GM12878 (cell line): ENCODE measurements at regions of chr6 and their contacts with region 1.

Region 1: DNA sequence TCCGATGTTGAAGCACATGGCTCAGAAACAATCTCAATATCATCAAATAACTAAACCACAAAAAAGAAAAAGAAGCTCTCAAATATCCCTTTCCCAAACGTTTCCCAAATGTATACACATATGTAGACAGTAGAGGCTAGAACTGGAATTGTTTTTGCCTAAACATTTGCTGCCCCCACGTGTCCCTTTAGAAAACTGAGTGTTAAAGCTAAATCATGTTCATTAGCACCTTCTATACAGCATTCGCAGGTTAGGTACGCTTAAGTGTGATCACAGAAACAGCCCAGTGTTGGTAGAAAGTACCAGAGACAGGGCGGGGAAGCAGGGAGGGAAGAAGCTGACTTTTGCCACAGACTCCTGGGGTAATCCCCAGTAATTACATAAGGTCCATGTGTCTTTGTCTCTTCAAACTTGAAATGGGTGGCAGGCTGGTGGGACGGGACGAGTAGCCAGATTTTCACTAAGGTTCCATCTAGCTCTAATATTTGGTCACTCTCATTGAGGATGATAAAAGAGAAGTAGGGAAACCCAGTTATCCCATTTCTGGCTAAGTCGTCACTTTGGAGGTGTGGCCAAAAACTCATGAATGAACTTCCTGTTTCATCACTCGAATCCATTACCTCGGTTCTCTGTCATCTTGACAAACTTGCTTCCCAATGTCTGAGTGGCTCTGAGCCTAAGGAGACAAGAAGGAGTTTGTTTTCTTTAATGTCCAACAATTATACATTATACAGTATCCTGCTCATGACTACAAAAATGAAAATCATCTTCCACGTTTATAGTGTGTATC is 15.0 kb upstream of the TFAP2A start:
- DNase-seq: peak; percentile 53
- ATAC-seq: peak; percentile 74
- H3K4me3 ChIP-seq: 0 out of 2 replicates have a peak overlapping the region, but pooled peaks have one; percentile 13
- H3K27ac ChIP-seq: no peak overlapping the region
- H3K4me1 ChIP-seq: no peaks in the 10 kb centered on the region; the same call in none of the 2 replicates
- H3K27me3 ChIP-seq: peaks cover 0 to 5% of the 10 kb centered on the region in 2 experiments; a peak in 1 of 4 replicates
- CTCF ChIP-seq: peak; percentile 55 to 78 (median 70); a peak in 5 of 6 replicates
- EP300 ChIP-seq: no peak
- POLR2A ChIP-seq: no peak
- RAD21 ChIP-seq: peak; percentile 85

Region 2: GRCh38 chr6:8539446-8539845 is 1890.4 kb before region 1 on chr6:
- CTCF ChIA-PET with region 1: no interaction called
- POLR2A ChIA-PET with region 1: no interaction called
- RAD21 ChIA-PET with region 1: no interaction called
- SMC1A ChIA-PET with region 1: interaction called, 3 read pairs
- in situ Hi-C with region 1: loop called (anchors 25 kb)
- intact Hi-C with region 1: loop called (anchors 10 kb)
- DNase-seq: no peak
- ATAC-seq: peak; percentile 66
- H3K4me3 ChIP-seq: no peak overlapping the region
- H3K27ac ChIP-seq: no peak overlapping the region
- H3K4me1 ChIP-seq: no peaks in the 10 kb centered on the region
- H3K27me3 ChIP-seq: no peaks in the 10 kb centered on the region
- CTCF ChIP-seq: peak; percentile 14 to 29 (median 29); a peak in 2 of 6 replicates
- EP300 ChIP-seq: no peak
- POLR2A ChIP-seq: no peak
- RAD21 ChIP-seq: peak; percentile 66

Region 3: DNA sequence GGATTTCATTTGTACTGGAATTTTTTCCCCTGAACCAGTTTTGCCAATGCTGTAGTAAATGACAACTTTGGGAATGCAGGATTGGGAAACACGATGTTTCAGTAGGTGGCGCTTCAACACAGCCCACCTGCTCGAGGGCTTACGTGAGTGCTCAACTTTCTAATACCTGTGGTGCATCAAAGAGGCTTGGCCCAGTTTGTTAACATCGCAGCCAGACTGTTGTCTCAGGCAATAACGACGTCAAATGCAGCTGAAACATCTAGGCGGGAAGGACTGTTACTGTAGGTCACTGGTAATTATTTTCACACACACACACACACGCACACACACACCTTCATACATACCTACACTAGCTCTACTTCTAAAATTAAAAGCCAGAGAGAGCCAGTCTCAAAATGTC is 1179.0 kb before region 1 on chr6:
- CTCF ChIA-PET with region 1: interaction called, 33 read pairs
- POLR2A ChIA-PET with region 1: no interaction called
- RAD21 ChIA-PET with region 1: interaction called, 12 read pairs
- SMC1A ChIA-PET with region 1: interaction called, 8 read pairs
- in situ Hi-C with region 1: loop called (anchors 10 kb)
- intact Hi-C with region 1: loop called (anchors 2 kb)
- DNase-seq: no peak
- ATAC-seq: peak; percentile 49; the same call in 2 of the 3 replicates
- H3K4me3 ChIP-seq: no peak overlapping the region
- H3K27ac ChIP-seq: no peak overlapping the region
- H3K4me1 ChIP-seq: no peaks in the 10 kb centered on the region
- H3K27me3 ChIP-seq: no peaks in the 10 kb centered on the region
- CTCF ChIP-seq: peak; percentile 30 to 67 (median 43); a peak in 4 of 6 replicates
- EP300 ChIP-seq: no peak
- POLR2A ChIP-seq: no peak
- RAD21 ChIP-seq: peak; percentile 87

Region 4: DNA sequence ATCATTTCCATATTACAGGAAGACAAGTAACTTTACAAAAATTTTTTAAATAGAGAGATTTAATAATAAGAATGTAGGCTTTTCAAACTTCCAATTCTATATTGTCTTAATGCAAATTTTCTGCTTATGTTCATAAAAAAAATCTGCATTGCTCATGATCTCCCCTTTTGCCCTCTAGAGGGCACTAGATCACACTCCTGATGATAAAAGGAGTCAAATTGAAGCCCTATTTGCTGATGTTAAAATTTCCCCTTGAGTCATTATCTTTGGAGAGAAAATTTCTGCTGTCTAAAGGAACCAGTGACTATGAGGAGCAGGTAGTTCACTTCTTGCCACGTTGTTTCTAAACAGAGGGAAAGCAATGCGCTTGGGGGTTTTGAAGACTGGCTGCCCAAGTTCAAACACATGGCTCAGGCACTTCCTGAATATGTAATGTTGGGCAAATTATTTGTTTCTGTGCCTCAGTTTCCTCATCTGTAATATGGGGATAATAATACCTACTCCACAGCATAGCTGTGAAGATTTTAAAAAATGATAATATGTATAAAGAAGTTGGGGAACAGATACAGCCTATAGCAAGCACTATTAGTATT is 889.2 kb before region 1 on chr6:
- CTCF ChIA-PET with region 1: interaction called, 4 read pairs
- POLR2A ChIA-PET with region 1: no interaction called
- RAD21 ChIA-PET with region 1: interaction called, 4 read pairs
- SMC1A ChIA-PET with region 1: interaction called, 5 read pairs
- in situ Hi-C with region 1: loop called (anchors 10 kb)
- intact Hi-C with region 1: loop called (anchors 5 kb)
- DNase-seq: no peak
- ATAC-seq: peak; percentile 82
- H3K4me3 ChIP-seq: no peak overlapping the region
- H3K27ac ChIP-seq: no peak overlapping the region
- H3K4me1 ChIP-seq: no peaks in the 10 kb centered on the region
- H3K27me3 ChIP-seq: no peaks in the 10 kb centered on the region
- CTCF ChIP-seq: peak; percentile 57 to 62 (median 61)
- EP300 ChIP-seq: no peak
- POLR2A ChIP-seq: no peak
- RAD21 ChIP-seq: peak; percentile 59

Region 5: DNA sequence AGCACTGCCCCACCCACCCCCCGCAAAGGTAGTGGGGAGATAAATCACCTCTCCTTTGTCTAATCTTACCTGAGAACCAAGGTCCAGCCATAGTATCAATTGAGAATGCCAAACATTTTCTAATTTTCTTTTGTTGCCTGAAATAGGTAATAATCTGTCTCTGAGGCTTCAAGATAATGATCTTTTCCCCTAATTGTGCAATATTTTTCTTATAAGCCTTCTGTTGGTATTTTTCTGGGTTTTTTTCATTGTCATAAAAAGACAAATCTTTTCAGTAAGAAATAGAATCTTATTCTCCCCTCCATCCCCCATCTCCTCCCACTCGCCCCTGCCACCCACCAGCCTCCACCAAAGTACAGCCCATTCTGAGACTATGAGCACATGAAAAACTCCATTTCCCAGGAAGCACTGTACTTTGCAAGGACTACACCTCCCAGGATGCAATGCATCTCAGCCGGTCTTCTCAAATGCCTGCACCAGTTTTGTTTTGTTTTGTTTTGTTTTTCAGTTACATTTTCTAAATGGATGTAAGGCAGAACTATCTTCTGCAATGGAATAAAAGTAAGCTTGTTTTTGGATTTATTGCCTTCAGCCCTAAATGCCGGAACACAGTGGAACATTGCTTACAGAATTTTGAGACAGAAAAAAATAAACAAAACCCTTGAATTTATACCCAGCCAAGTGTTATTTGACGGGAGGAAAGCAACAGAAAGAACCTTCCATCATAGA is 282.9 kb before region 1 on chr6:
- CTCF ChIA-PET with region 1: no interaction called
- POLR2A ChIA-PET with region 1: no interaction called
- RAD21 ChIA-PET with region 1: no interaction called
- SMC1A ChIA-PET with region 1: no interaction called
- in situ Hi-C with region 1: no loop called
- intact Hi-C with region 1: loop called (anchors 10 kb)
- DNase-seq: peak; percentile 8
- ATAC-seq: peak; percentile 99
- H3K4me3 ChIP-seq: peak overlapping the region; percentile 19; the same call in 1 of the 2 replicates
- H3K27ac ChIP-seq: no peak overlapping the region
- H3K4me1 ChIP-seq: no peaks in the 10 kb centered on the region
- H3K27me3 ChIP-seq: no peaks in the 10 kb centered on the region
- CTCF ChIP-seq: no peak
- EP300 ChIP-seq: no peak
- POLR2A ChIP-seq: no peak
- RAD21 ChIP-seq: no peak

Region 6: GRCh38 chr6:10381133-10381829 is 48.6 kb before region 1 on chr6:
- CTCF ChIA-PET with region 1: interaction called, 5 read pairs
- POLR2A ChIA-PET with region 1: no interaction called
- RAD21 ChIA-PET with region 1: interaction called, 5 read pairs
- SMC1A ChIA-PET with region 1: no interaction called
- in situ Hi-C with region 1: no loop called
- intact Hi-C with region 1: loop called (anchors 1 kb)
- DNase-seq: no peak
- ATAC-seq: peak; percentile 81
- H3K4me3 ChIP-seq: no peak overlapping the region
- H3K27ac ChIP-seq: no peak overlapping the region
- H3K4me1 ChIP-seq: no peaks in the 10 kb centered on the region
- H3K27me3 ChIP-seq: peaks cover 10 to 32% of the 10 kb centered on the region in 2 experiments
- CTCF ChIP-seq: peak in 2 of 3 experiments; percentile 20 to 46; a peak in 2 of 6 replicates
- EP300 ChIP-seq: no peak
- POLR2A ChIP-seq: no peak
- RAD21 ChIP-seq: peak; percentile 13; the same call in 1 of the 2 replicates

Region 7: DNA sequence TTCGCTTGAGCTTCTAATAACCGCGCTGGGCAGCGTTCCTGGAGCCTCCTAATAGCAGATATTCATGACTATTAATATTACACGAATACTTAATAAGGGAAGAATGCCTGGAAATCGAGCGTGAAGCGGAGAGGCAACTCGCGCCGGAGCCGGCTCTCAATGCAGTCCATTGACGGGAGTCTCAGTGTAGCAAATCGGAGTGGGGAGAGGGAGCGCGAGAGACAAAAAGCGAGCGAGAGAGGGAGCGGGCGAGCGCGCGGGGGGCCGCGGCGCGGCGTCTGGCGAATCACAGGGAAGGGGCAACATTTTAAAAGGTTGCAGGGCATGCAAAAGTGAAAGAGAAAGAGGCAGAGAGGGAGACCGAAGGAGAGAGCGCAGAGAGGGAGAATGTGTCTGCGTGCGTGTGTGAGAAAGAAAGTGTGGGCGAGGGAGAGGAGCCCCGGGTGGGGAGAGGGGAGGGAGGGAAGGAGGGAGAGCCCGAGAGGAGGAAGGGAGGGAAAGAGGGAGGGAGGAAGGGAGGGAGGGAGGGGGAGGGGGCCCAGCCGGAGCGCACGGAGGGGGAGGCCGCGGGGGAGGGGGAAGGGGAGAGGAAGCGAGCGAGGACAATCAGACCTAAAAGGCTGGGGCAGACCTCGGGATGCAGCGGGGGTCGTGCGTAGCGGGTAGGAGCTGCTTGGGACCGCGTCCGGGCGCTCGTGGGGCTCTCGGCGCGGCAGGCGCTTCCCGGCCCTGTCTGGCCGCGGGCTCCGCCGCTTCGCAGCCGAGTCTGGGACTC is 17.7 kb before region 1 on chr6:
- CTCF ChIA-PET with region 1: interaction called, 20 read pairs
- POLR2A ChIA-PET with region 1: interaction called, 3 read pairs
- RAD21 ChIA-PET with region 1: interaction called, 3 read pairs
- SMC1A ChIA-PET with region 1: interaction called, 7 read pairs
- in situ Hi-C with region 1: no loop called
- intact Hi-C with region 1: no loop called
- DNase-seq: no peak
- ATAC-seq: peak; percentile 75
- H3K4me3 ChIP-seq: peak overlapping the region; percentile 70
- H3K27ac ChIP-seq: no peak overlapping the region
- H3K4me1 ChIP-seq: peaks cover 15% of the 10 kb centered on the region
- H3K27me3 ChIP-seq: peaks cover 10 to 46% of the 10 kb centered on the region in 2 experiments
- CTCF ChIP-seq: no peak
- EP300 ChIP-seq: no peak
- POLR2A ChIP-seq: no peak
- RAD21 ChIP-seq: no peak

Region 8: GRCh38 chr6:10495029-10495428 is 65.2 kb after region 1 on chr6:
- CTCF ChIA-PET with region 1: no interaction called
- POLR2A ChIA-PET with region 1: no interaction called
- RAD21 ChIA-PET with region 1: no interaction called
- SMC1A ChIA-PET with region 1: no interaction called
- in situ Hi-C with region 1: no loop called
- intact Hi-C with region 1: no loop called
- DNase-seq: no peak
- ATAC-seq: no peak
- H3K4me3 ChIP-seq: no peak overlapping the region
- H3K27ac ChIP-seq: no peak overlapping the region
- H3K4me1 ChIP-seq: no peaks in the 10 kb centered on the region
- H3K27me3 ChIP-seq: no peaks in the 10 kb centered on the region
- CTCF ChIP-seq: no peak
- EP300 ChIP-seq: no peak
- POLR2A ChIP-seq: no peak
- RAD21 ChIP-seq: no peak

Region 9: GRCh38 chr6:10569392-10570127 is 139.7 kb after region 1 on chr6:
- CTCF ChIA-PET with region 1: no interaction called
- POLR2A ChIA-PET with region 1: no interaction called
- RAD21 ChIA-PET with region 1: no interaction called
- SMC1A ChIA-PET with region 1: no interaction called
- in situ Hi-C with region 1: no loop called
- intact Hi-C with region 1: no loop called
- DNase-seq: no peak
- ATAC-seq: no peak
- H3K4me3 ChIP-seq: no peak overlapping the region
- H3K27ac ChIP-seq: no peak overlapping the region
- H3K4me1 ChIP-seq: no peaks in the 10 kb centered on the region
- H3K27me3 ChIP-seq: no peaks in the 10 kb centered on the region
- CTCF ChIP-seq: no peak
- EP300 ChIP-seq: no peak
- POLR2A ChIP-seq: no peak
- RAD21 ChIP-seq: no peak